ENCODE measurements at regions of chr2 and their contacts with region 1.

Region 1: DNA sequence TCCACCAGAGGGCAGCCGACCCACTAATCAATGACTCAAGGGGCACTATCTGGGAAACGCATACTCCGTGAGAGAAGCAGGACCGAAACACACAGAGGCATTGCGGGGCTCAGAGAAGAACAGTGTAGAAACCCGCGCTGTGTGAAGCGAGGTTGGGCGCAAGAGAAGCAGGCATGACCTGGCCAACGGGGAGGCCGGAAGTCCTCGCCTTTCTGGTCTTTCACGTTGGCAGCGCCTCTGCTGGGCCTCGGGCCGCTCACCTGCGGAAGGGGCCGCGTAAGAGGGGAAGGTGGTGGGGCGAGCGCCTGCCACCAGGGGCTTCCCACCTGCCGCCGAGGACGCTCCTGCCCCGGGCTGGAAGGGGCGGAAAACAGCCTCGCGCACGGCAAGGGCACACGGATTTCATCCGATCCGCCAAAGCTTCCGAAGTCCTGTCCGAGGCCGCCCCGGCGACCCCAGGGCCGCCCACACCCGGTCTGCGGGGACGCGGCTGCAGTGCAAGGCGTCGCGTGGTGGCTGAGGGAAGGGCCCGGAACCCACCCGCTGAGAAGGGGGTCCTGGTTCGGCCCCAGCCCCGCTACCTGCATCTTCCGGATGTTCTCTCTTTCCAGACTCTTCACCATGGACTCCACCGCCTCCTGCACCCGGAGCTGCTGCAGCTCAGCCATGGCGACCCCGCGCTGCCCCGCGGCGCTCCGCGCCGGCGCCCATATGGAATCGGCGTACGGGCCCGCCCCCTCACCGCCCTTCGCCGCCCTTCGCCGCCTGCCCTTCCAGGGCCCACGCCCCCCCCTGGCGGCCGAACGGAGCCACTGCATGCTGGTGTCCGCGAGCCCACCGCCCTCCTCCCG is at the start of gene FAM136A:
- DNase-seq: peak; percentile 93
- ATAC-seq: peak; percentile 79
- H3K4me3 Mint-ChIP-seq: peak within 1 kb of the TSS; percentile 91
- H3K27ac Mint-ChIP-seq: peak within 1 kb of the TSS; percentile 94
- H3K4me1 Mint-ChIP-seq: peaks cover 35% of the 10 kb centered on the region
- H3K27me3 Mint-ChIP-seq: no peaks in the 10 kb centered on the region
- total RNA-seq, gene FAM136A: 45.0 to 52.8 TPM

Region 2: GRCh38 chr2:69914170-69914960 is 387.2 kb before region 1 on chr2:
- CTCF ChIA-PET with region 1: interaction called, 8 read pairs
- POLR2A ChIA-PET with region 1: no interaction called
- intact Hi-C with region 1: loop called (anchors 1 kb)
- DNase-seq: peak; percentile 100
- ATAC-seq: peak; percentile 96
- H3K4me3 Mint-ChIP-seq: peak overlapping the region; percentile 81
- H3K27ac Mint-ChIP-seq: peak overlapping the region; percentile 89
- H3K4me1 Mint-ChIP-seq: peaks cover 35% of the 10 kb centered on the region
- H3K27me3 Mint-ChIP-seq: no peaks in the 10 kb centered on the region

Region 3: GRCh38 chr2:70248181-70248847 is 53.3 kb before region 1 on chr2 and contains the start of gene TIA1:
- CTCF ChIA-PET with region 1: no interaction called
- POLR2A ChIA-PET with region 1: no interaction called
- intact Hi-C with region 1: loop called in 1 of 2 experiments (anchors 2 kb)
- DNase-seq: peak; percentile 99
- ATAC-seq: peak; percentile 98
- H3K4me3 Mint-ChIP-seq: peak within 1 kb of the TSS; percentile 98
- H3K27ac Mint-ChIP-seq: peak within 1 kb of the TSS; percentile 97
- H3K4me1 Mint-ChIP-seq: peaks cover 30% of the 10 kb centered on the region
- H3K27me3 Mint-ChIP-seq: no peaks in the 10 kb centered on the region
- total RNA-seq, gene TIA1: 85.4 to 98.3 TPM

Region 4: DNA sequence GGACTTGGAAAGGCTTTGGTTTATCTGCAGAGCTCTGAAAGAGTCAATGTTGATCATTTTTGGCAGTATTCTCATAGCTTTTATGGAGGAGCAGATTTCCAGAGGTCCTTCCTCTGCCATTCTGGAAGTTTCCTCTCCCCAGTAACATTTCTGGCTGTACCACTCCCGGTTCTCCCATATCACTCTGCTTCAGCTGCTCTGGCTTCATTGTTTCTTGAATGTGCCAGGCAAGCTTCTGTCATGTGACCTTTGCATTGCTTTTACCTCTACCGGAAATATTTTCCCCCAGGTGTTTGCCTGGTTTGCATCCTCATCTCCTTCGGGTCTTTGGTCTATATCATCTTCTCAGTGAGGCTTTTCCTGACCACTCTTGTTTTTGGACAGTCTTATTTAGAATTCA is 31.2 kb before region 1 on chr2:
- CTCF ChIA-PET with region 1: no interaction called
- POLR2A ChIA-PET with region 1: no interaction called
- intact Hi-C with region 1: no loop called
- DNase-seq: no peak
- ATAC-seq: no peak
- H3K4me3 Mint-ChIP-seq: no peak overlapping the region
- H3K27ac Mint-ChIP-seq: no peak overlapping the region
- H3K4me1 Mint-ChIP-seq: peaks cover 2% of the 10 kb centered on the region
- H3K27me3 Mint-ChIP-seq: no peaks in the 10 kb centered on the region

Region 5: GRCh38 chr2:70553584-70554337 is 252.2 kb after region 1 on chr2 and contains the start of gene TGFA:
- CTCF ChIA-PET with region 1: interaction called, 4 read pairs
- POLR2A ChIA-PET with region 1: no interaction called
- intact Hi-C with region 1: loop called in 1 of 2 experiments (anchors 2 kb)
- DNase-seq: peak; percentile 82
- ATAC-seq: peak; percentile 91
- H3K4me3 Mint-ChIP-seq: peak within 1 kb of the TSS; percentile 75
- H3K27ac Mint-ChIP-seq: peak within 1 kb of the TSS; percentile 24
- H3K4me1 Mint-ChIP-seq: peaks cover 24% of the 10 kb centered on the region
- H3K27me3 Mint-ChIP-seq: peaks cover 25% of the 10 kb centered on the region
- total RNA-seq, gene TGFA: 0.07 to 0.18 TPM

Region 6: DNA sequence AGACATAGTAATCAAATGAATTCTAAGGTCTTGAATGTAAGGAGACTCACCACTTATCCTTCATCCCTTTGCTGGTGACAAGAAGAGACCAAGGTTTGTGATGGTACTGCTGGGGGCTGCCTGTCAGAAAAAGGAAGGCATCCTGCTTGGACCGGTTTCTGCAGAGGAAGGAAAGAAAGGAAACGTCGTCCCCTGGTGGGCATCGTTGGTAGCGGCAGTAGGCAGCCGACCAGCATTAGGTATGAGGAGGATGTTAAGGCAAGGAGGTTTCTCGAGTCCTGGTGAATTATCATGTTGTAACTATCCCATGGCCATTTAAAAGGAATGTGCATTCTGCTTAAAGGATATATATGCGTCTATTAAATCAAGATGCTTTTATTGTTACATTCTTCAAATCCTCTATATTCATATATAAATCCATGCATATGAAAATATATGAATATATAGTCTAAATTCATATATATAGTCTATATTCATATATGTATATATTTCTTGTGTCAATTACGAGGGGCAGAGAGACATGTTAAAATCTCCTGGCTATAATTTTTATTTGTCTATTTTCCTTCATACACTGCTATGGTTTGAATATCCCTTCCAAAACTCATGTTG is 346.4 kb after region 1 on chr2:
- CTCF ChIA-PET with region 1: interaction called, 80 read pairs
- POLR2A ChIA-PET with region 1: no interaction called
- intact Hi-C with region 1: loop called (anchors 1 kb)
- DNase-seq: peak; percentile 87
- ATAC-seq: peak; percentile 88
- H3K4me3 Mint-ChIP-seq: no peak overlapping the region
- H3K27ac Mint-ChIP-seq: no peak overlapping the region
- H3K4me1 Mint-ChIP-seq: peaks cover 4% of the 10 kb centered on the region
- H3K27me3 Mint-ChIP-seq: no peaks in the 10 kb centered on the region

Region 7: GRCh38 chr2:70861777-70862625 is 560.4 kb after region 1 on chr2:
- CTCF ChIA-PET with region 1: no interaction called
- POLR2A ChIA-PET with region 1: no interaction called
- intact Hi-C with region 1: loop called in 1 of 2 experiments (anchors 5 kb)
- DNase-seq: peak; percentile 86
- ATAC-seq: peak; percentile 89
- H3K4me3 Mint-ChIP-seq: no peak overlapping the region
- H3K27ac Mint-ChIP-seq: no peak overlapping the region
- H3K4me1 Mint-ChIP-seq: peaks cover 2% of the 10 kb centered on the region
- H3K27me3 Mint-ChIP-seq: peaks cover 33% of the 10 kb centered on the region

Region 8: GRCh38 chr2:71226965-71227560 is 925.5 kb after region 1 on chr2 and contains the start of gene PAIP2B:
- CTCF ChIA-PET with region 1: no interaction called
- POLR2A ChIA-PET with region 1: no interaction called
- intact Hi-C with region 1: loop called in 1 of 2 experiments (anchors 10 kb)
- DNase-seq: peak; percentile 99
- ATAC-seq: peak; percentile 97
- H3K4me3 Mint-ChIP-seq: peak within 1 kb of the TSS; percentile 94
- H3K27ac Mint-ChIP-seq: peak within 1 kb of the TSS; percentile 85
- H3K4me1 Mint-ChIP-seq: peaks cover 15% of the 10 kb centered on the region
- H3K27me3 Mint-ChIP-seq: peaks cover 5% of the 10 kb centered on the region
- total RNA-seq, gene PAIP2B: 2.3 to 3.0 TPM

Region 9: DNA sequence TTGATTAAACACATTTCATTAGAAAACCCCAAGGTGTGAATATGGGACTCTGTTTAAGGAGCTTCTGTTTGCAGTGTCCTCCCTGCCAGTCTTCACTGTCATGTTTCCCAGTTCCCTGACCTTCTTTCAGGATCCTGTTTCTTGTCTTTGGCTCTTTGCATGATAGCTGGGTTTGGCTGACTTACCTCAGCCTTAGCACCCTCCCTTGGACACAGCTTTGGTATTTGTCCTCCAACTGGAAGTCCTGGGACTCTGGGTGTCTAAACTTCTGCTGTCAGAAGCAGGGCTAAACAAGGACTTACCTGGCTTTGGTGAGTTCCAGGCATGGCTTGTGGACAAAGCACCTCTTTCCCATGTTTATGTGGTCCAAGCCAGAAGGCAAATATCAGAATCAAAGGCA is 936.5 kb after region 1 on chr2:
- CTCF ChIA-PET with region 1: no interaction called
- POLR2A ChIA-PET with region 1: no interaction called
- intact Hi-C with region 1: no loop called
- DNase-seq: no peak
- ATAC-seq: no peak
- H3K4me3 Mint-ChIP-seq: no peak overlapping the region
- H3K27ac Mint-ChIP-seq: no peak overlapping the region
- H3K4me1 Mint-ChIP-seq: no peaks in the 10 kb centered on the region
- H3K27me3 Mint-ChIP-seq: peaks cover 7% of the 10 kb centered on the region

Measured in activated CD4-positive, alpha-beta T cell treated with anti-CD3 and anti-CD28 coated beads for 36 hours (primary cell).